Activated naive CD4-positive, alpha-beta T cell treated with anti-CD3 and anti-CD28 coated beads for 36 hours (primary cell): ENCODE measurements at regions of chr18 and their contacts with region 1.

Region 1: GRCh38 chr18:3245853-3246634 is 1.6 kb upstream of the MYL12A start:
- DNase-seq: peak; percentile 91
- H3K4me3 Mint-ChIP-seq: peak overlapping the region; percentile 90
- H3K27ac Mint-ChIP-seq: peak overlapping the region; percentile 92
- H3K4me1 Mint-ChIP-seq: peaks cover 23% of the 10 kb centered on the region
- H3K27me3 Mint-ChIP-seq: no peaks in the 10 kb centered on the region

Region 2: DNA sequence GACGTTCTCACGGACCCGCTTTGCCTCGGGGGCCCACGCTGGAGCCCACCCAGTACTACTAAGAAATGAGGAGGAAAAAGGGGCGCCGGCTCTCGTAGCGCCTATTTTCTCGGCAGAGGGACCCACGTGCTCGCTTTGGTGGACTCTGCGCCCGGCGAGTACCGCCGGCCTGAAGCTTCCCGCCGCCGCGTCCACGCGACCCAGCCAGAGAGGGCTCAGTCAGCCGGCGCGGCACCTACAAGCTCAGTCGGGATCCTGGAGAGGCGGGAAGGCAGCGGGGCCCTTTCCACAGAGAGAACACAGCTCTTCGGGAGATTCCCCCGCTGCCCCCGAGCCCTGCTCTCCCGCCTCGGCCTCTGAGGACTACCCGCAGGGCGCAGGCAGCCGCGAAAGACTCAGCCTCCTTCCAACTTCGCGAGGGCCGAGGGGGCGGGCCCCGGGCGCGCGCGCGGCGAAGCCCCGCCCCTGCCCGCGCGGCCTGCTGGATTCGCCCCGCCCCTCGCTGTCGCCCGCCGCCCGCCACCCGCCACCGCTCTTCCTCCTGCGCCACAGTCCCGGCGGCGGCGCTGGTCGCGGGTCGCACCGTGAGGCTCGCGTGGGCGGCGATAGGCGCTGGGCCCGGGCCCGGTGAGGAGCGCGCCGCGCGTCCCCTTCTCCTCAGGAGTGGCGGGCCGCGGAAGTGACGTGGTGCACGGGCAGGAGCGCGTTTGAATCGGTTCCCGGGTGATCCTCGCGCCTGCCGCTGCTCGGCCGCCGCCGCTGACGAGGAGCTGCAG is 590.7 kb before region 1 on chr18 and contains the start of gene SMCHD1:
- CTCF ChIA-PET with region 1: no interaction called
- intact Hi-C with region 1: loop called (anchors 1 kb)
- DNase-seq: peak; percentile 93
- H3K4me3 Mint-ChIP-seq: peak within 1 kb of the TSS; percentile 93
- H3K27ac Mint-ChIP-seq: peak within 1 kb of the TSS; percentile 96
- H3K4me1 Mint-ChIP-seq: peaks cover 34% of the 10 kb centered on the region
- H3K27me3 Mint-ChIP-seq: no peaks in the 10 kb centered on the region
- total RNA-seq, gene SMCHD1: 91.3 to 91.5 TPM

Region 3: DNA sequence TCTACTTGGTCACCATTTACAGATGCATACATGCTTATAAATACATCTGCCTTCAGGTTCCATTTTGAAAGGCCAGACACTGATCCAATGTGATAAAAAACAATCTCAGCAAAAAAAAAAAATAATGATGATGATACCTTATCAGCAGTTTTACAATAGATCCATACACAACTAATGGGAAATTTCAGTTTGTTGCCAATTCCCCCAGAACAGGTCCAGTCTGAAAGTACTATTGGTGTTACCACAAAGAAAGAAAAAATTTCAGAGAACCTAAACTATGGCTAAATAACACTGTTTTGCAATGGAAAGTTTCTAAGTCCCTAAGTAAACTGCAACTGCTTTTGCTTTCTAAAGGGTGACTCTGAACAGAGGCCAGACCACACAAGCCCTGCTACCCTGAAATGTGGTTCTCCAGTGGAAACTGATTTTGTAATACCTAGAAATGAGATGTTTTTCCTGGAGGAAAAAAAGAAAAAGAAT is 287.2 kb before region 1 on chr18:
- CTCF ChIA-PET with region 1: no interaction called
- intact Hi-C with region 1: loop called (anchors 1 kb)
- DNase-seq: peak; percentile 44
- H3K4me3 Mint-ChIP-seq: peak overlapping the region; percentile 53
- H3K27ac Mint-ChIP-seq: peak overlapping the region; percentile 100
- H3K4me1 Mint-ChIP-seq: peaks cover 88% of the 10 kb centered on the region
- H3K27me3 Mint-ChIP-seq: no peaks in the 10 kb centered on the region

Region 4: DNA sequence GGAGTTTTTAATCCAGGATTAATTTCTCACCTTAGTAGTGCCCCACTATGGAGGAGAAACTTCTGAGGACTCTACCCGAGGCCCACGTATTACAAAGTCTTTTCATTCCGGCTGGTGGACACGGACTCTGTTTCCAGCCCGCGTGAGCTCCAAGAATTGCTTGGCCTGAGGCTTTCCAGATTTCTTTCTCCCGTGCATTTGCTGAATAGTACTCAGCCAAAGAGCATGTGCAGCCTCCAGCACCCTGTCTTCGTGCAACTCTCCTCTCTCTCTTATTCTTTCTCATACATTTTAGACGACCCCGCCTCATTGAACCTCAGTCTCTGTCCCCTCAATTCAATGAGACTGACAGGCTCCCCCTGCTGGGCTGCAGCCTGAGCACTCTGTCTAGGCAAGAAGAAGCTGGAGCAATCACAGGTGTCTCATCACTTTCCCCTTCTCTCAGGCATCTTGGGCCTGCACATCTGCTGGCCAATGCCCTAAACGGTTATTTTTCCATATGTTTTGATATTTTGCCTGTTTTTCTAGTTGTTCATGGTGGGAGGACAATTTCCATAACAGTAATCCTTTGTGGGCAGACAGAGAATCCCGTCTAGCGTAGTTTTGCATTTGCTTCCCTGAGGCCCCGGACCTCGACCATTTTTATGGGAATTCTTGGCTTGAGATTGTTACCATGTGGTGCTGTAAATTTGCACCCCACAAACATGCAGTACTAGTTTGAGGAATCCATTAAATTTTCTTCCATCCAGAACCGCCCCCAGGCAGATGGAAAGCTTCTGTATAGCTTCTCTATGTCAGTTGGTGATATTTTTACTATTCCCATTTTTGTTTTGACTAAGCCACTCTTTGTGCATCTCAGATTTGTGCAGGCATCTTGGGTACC is 183.0 kb before region 1 on chr18:
- CTCF ChIA-PET with region 1: interaction called, 4 read pairs
- intact Hi-C with region 1: loop called (anchors 1 kb)
- DNase-seq: peak; percentile 89
- H3K4me3 Mint-ChIP-seq: peak overlapping the region; percentile 4
- H3K27ac Mint-ChIP-seq: no peak overlapping the region
- H3K4me1 Mint-ChIP-seq: peaks cover 64% of the 10 kb centered on the region
- H3K27me3 Mint-ChIP-seq: no peaks in the 10 kb centered on the region

Region 5: GRCh38 chr18:3217948-3218647 is 27.9 kb before region 1 on chr18:
- CTCF ChIA-PET with region 1: interaction called, 15 read pairs
- intact Hi-C with region 1: loop called (anchors 1 kb)
- DNase-seq: no peak
- H3K4me3 Mint-ChIP-seq: no peak overlapping the region
- H3K27ac Mint-ChIP-seq: no peak overlapping the region
- H3K4me1 Mint-ChIP-seq: peaks cover 9% of the 10 kb centered on the region
- H3K27me3 Mint-ChIP-seq: no peaks in the 10 kb centered on the region

Region 6: DNA sequence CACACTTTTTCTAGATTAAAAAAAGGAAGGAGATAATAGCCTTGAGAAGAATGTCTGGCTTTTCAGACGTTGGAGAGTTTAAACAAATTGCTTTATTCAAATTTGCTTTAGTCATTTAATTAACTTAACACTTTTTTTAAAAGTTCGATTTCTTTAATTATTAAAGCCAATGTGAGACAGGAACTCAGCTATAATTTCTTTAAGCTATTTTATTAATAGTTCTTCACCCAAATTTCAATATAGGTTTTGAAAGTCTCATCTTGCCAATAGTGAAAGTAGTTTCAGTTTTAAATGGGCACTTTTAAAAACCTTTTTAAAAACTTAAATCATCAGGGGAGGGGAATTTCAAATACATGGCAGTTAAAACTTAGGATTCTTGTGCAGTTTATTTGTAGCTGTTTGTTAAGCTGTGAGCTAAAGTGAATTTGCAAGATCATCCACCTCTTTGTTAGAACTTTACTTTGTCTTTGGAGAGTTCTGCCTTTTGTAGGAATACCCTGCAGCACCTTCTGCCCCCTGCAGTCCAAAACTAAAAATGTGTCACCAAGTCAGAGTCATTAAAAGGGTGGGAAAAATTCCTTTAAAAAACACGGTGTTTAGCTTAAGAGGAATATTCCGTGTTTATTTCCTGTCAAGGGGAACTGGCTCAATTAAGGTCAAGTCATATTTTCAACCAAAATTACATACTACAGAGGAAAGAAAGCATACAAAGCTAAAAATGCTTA is 208.5 kb after region 1 on chr18:
- CTCF ChIA-PET with region 1: interaction called, 3 read pairs
- intact Hi-C with region 1: loop called (anchors 1 kb)
- DNase-seq: peak; percentile 31
- H3K4me3 Mint-ChIP-seq: peak overlapping the region; percentile 89
- H3K27ac Mint-ChIP-seq: peak overlapping the region; percentile 99
- H3K4me1 Mint-ChIP-seq: peaks cover 63% of the 10 kb centered on the region
- H3K27me3 Mint-ChIP-seq: no peaks in the 10 kb centered on the region